PC-9 (cell line): ENCODE measurements at regions of chr5 and their contacts with region 1.

Region 1: GRCh38 chr5:69252437-69252836 is 17.8 kb downstream of the CDK7 start:
- DNase-seq: no peak
- H3K4me3 ChIP-seq: no peak overlapping the region
- H3K27ac ChIP-seq: 0 out of 2 replicates have a peak overlapping the region, but pooled peaks have one; percentile 16
- H3K4me1 ChIP-seq: no peaks in the 10 kb centered on the region
- H3K27me3 ChIP-seq: no peaks in the 10 kb centered on the region
- CTCF ChIP-seq: no peak

Region 2: GRCh38 chr5:69378376-69378775 is 125.9 kb after region 1 on chr5:
- CTCF ChIA-PET with region 1: interaction called, 10 read pairs
- POLR2A ChIA-PET with region 1: interaction called, 3 read pairs
- intact Hi-C with region 1: no loop called
- DNase-seq: no peak
- H3K4me3 ChIP-seq: no peak overlapping the region
- H3K27ac ChIP-seq: no peak overlapping the region
- H3K4me1 ChIP-seq: no peaks in the 10 kb centered on the region
- H3K27me3 ChIP-seq: no peaks in the 10 kb centered on the region
- CTCF ChIP-seq: no peak